ENCODE measurements at regions of chr2 and their contacts with region 1.

Region 1: DNA sequence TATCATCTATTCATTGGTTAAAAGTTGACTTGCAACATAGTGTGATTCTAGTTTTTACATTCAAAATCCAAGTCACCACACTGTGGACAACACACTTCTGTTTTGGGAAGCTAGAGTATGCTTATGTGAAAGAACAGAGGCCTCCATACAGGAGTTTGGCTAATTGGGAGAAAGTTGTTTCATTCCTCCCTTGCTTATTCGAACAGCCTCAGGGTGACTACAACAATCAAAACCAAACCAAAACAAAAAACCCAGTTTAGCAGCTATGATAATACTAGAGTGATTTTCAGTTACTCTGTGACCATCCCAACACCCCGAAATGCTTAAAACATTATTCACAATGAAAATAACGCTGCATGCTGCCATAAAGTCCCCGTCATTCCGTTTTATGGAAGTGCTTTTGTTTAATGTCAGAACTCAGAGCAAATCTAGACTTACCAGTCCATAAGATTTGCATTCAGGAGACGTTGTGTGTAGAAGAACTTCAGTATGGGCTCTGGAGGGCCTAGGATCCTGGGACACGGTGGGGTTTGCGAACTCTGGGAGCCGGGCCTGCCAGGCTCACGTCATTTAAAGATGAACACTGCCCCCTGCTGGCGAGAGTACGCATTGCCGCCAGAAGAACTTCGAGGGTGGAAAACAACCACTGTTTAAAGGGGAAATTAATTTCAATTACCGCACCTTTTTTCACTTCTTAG is 111.4 kb downstream of the FTCDNL1 start:
- DNase-seq: peak; percentile 61
- H3K4me3 Mint-ChIP-seq: no peak overlapping the region
- H3K27ac Mint-ChIP-seq: no peak overlapping the region
- H3K4me1 Mint-ChIP-seq: peaks cover 4% of the 10 kb centered on the region
- H3K27me3 Mint-ChIP-seq: peaks cover 31% of the 10 kb centered on the region

Region 2: GRCh38 chr2:199704358-199705238 is 35.0 kb before region 1 on chr2:
- CTCF ChIA-PET with region 1: interaction called, 29 read pairs
- POLR2A ChIA-PET with region 1: no interaction called
- DNase-seq: peak; percentile 18
- H3K4me3 Mint-ChIP-seq: no peak overlapping the region
- H3K27ac Mint-ChIP-seq: no peak overlapping the region
- H3K4me1 Mint-ChIP-seq: peaks cover 9% of the 10 kb centered on the region
- H3K27me3 Mint-ChIP-seq: peaks cover 8% of the 10 kb centered on the region

Region 3: DNA sequence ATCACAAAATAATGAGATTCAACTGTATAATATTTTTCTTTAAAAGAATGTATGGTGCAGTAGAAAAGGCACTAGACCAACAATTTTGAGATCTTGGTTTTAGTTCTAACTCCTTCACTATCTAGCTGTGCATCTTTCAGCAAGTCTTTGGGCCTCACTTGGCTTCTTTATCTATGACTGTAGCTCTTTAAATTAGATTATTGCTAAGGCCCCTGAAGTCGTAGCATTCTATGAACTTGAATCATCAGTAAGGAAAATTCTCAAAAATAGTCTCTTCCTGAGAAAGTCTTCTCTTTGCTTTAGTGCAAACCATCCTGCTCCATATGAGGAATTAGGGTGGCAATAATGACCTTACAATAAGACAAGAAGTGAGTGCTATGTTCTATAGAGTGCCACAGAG is 29.0 kb before region 1 on chr2:
- CTCF ChIA-PET with region 1: interaction called, 29 read pairs
- POLR2A ChIA-PET with region 1: no interaction called
- DNase-seq: no peak
- H3K4me3 Mint-ChIP-seq: no peak overlapping the region
- H3K27ac Mint-ChIP-seq: no peak overlapping the region
- H3K4me1 Mint-ChIP-seq: peaks cover 5% of the 10 kb centered on the region
- H3K27me3 Mint-ChIP-seq: peaks cover 13% of the 10 kb centered on the region

Region 4: GRCh38 chr2:199727306-199727705 is 12.3 kb before region 1 on chr2:
- CTCF ChIA-PET with region 1: interaction called, 12 read pairs
- POLR2A ChIA-PET with region 1: no interaction called
- DNase-seq: no peak
- H3K4me3 Mint-ChIP-seq: no peak overlapping the region
- H3K27ac Mint-ChIP-seq: no peak overlapping the region
- H3K4me1 Mint-ChIP-seq: no peaks in the 10 kb centered on the region
- H3K27me3 Mint-ChIP-seq: peaks cover 26% of the 10 kb centered on the region

Region 5: GRCh38 chr2:199751472-199752120 is 12.0 kb after region 1 on chr2:
- CTCF ChIA-PET with region 1: interaction called, 12 read pairs
- POLR2A ChIA-PET with region 1: no interaction called
- DNase-seq: no peak
- H3K4me3 Mint-ChIP-seq: no peak overlapping the region
- H3K27ac Mint-ChIP-seq: no peak overlapping the region
- H3K4me1 Mint-ChIP-seq: no peaks in the 10 kb centered on the region
- H3K27me3 Mint-ChIP-seq: peaks cover 3% of the 10 kb centered on the region

Region 6: GRCh38 chr2:199756743-199757142 is 17.2 kb after region 1 on chr2:
- CTCF ChIA-PET with region 1: interaction called, 12 read pairs
- POLR2A ChIA-PET with region 1: no interaction called
- DNase-seq: no peak
- H3K4me3 Mint-ChIP-seq: no peak overlapping the region
- H3K27ac Mint-ChIP-seq: no peak overlapping the region
- H3K4me1 Mint-ChIP-seq: no peaks in the 10 kb centered on the region
- H3K27me3 Mint-ChIP-seq: peaks cover 10% of the 10 kb centered on the region

Region 7: DNA sequence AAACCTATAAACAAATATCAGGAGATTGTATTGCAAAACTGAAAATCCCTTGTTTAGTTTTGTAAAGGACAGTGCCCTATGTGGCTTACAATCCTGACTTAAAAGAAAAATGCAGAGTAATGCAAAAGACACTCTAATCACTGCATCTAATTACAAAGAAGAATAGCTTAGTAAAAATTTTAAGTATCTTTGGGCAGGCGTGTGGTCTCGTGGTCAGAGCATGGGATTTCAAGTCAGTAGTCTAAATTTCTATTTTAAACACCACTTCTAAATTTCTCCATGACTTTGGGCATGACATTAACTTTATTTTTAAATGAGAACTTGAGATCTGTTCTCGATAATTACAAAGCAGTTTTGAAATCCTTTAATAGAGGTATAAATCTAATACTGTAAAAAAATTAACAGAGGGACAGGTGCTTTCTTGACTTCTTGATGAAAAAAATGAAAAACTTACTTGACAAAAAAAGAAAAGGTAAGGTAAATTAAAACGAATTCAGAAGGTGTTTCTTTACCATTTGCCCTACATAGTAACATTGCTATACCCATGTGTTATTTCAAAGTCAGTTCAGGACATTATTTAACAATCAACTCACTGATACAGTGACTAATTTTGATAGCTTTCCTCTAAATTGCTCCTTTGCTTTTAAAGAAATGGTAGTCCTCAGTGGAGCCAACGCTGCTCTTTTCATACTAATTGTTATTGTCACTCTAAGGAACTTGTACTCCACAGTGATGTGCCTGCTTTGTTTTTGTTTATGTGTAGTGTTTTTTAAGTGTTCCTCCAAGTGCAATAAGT is 129.1 kb after region 1 on chr2:
- CTCF ChIA-PET with region 1: no interaction called
- POLR2A ChIA-PET with region 1: no interaction called
- DNase-seq: no peak
- H3K4me3 Mint-ChIP-seq: no peak overlapping the region
- H3K27ac Mint-ChIP-seq: no peak overlapping the region
- H3K4me1 Mint-ChIP-seq: no peaks in the 10 kb centered on the region
- H3K27me3 Mint-ChIP-seq: peaks cover 36% of the 10 kb centered on the region

Measured in activated CD4-positive, alpha-beta memory T cell treated with anti-CD3 and anti-CD28 coated beads, Interleukin-2, amount 10 ng/mL, durations not matched to agents 7 days and 5 days (primary cell).